ENCODE measurements at regions of chr19 and their contacts with region 1.

Region 1: DNA sequence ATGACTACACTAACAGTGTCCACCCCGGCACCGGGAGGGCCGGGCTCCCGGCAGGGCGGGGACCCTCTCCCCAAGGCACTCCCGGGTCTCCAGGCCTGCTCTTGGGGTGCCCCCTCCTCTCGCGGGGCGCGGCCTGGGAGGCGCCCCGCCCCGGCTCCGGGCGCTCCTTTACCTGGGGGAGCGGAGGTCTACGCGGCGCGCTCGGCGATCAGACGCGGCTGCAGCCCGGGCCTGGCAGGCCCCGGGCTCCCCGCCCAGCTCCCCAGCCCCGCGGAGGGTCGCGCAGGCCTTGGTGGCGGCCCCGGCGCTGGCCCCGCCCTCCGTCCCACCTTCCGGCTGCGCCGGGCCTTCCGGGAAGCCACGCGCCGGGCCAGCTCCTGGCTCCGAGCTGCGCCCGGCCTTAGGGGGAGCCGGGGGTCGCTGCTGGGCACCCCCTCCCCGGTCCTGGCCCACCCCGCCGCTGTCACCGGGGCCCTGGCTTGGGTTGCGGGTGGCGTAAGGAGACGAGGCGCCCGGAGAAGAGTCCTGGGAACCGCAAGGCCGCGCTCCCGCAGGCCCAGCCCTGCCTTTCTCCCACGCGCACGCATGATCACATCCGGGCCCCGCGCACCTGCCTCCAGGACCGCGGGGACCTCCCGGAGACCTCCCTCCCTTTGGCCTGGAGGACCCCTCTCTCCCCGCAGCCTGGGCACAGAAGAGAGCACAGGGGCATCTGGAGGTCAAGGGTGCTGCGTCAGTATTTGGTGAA is at the start of gene C19orf12:
- DNase-seq: peak in 1 of 2 donors; percentile 77
- H3K4me3 ChIP-seq: peak within 1 kb of the TSS; percentile 88 to 94
- H3K27ac ChIP-seq: peak within 1 kb of the TSS; percentile 89 to 96
- H3K4me1 ChIP-seq: peaks cover 0 to 42% (median 29%) of the 10 kb centered on the region in 4 donors
- H3K27me3 ChIP-seq: no peaks in the 10 kb centered on the region
- CTCF ChIP-seq: peak in 1 of 2 experiments; percentile 7

Region 2: GRCh38 chr19:29610563-29611271 is 104.4 kb before region 1 on chr19:
- intact Hi-C with region 1: loop called (anchors 2 kb)
- DNase-seq: peak; percentile 84 to 86
- H3K4me3 ChIP-seq: no peak overlapping the region
- H3K27ac ChIP-seq: no peak overlapping the region
- H3K4me1 ChIP-seq: peaks cover 0 to 9% (median 6%) of the 10 kb centered on the region in 4 donors
- H3K27me3 ChIP-seq: no peaks in the 10 kb centered on the region
- CTCF ChIP-seq: peak; percentile 83 to 88

Region 3: GRCh38 chr19:29662604-29663404 is 52.3 kb before region 1 on chr19:
- intact Hi-C with region 1: loop called (anchors 5 kb)
- DNase-seq: peak; percentile 85 to 93
- H3K4me3 ChIP-seq: peak overlapping the region; percentile 16 to 37
- H3K27ac ChIP-seq: peak overlapping the region; percentile 93
- H3K4me1 ChIP-seq: peaks cover 0 to 59% (median 46%) of the 10 kb centered on the region in 4 donors
- H3K27me3 ChIP-seq: no peaks in the 10 kb centered on the region
- CTCF ChIP-seq: no peak

Region 4: DNA sequence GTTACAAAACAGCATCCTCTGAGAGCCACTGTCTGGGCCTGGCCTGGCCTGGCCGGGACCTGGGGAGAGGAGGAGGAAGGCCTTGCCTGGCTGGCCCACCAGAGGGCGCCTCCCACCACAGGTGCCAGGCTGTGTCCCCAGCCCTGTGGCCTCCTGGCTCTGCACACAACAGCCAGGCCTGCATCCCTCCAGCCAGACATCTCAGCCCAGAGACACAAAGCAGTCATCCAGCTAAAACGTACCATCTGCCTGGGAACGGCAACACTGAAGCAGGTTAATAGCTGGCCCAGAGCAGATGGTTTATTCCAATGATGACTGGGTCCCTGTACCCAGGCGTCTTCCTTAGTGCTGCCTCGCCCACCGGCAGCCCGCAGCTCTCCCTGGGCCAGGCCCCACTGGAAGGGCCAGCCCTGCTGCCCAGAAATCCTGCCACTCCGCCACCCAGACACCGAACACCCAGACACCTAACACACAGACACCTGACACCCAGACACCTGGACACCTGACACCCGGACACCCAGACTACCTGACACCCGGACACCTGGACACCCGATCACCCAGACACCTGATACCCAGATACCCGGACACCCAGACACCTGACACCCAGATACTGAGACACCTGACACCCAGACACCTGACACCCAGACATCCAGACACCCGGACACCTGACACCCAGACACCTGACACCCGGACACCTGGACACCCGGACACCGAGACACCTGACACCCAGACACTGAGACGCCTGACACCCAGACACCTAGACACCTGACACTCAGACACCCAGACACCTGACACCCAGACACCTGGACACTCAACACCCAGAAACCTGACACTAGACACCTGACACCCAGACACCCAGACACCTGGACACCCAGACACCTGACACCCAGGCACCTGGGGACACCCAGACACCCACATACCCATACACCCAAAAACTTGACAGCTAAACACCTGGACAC is 20.2 kb before region 1 on chr19:
- intact Hi-C with region 1: loop called (anchors 2 kb)
- DNase-seq: peak; percentile 89 to 90
- H3K4me3 ChIP-seq: no peak overlapping the region
- H3K27ac ChIP-seq: peak overlapping the region in 1 of 2 donors; percentile 28
- H3K4me1 ChIP-seq: no peaks in the 10 kb centered on the region
- H3K27me3 ChIP-seq: no peaks in the 10 kb centered on the region
- CTCF ChIP-seq: peak; percentile 84 to 95

Region 5: DNA sequence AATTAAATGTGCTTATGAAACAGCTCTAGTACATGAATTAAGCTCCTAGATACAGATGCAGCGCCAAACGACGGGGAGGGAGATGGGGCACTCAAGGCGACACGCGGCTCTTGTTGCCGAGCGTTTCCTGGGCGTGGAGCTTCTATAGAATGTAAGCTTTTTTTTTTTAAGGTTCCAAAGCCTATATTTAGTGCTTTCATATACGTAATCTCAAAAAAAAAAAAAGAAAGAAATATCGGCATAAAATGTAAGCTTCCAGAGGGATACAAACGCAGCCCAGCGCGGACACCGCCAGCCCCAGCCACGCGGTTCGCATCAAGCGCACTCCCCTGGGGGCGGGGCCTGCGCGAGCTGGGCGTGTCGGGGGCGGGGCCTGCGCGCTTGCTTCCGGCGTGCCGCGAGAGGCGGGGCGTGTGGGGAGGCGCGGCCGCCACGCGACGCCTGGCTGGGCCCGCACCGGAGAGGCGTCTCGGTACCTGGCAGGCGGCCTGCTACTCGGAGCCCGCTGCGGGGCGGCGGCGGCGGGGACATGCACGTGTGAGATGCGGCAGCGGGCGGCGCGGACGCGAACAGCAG is 226.8 kb after region 1 on chr19 and contains the start of gene URI1:
- intact Hi-C with region 1: loop called (anchors 2 kb)
- DNase-seq: peak; percentile 84 to 95
- H3K4me3 ChIP-seq: peak within 1 kb of the TSS; percentile 72 to 81
- H3K27ac ChIP-seq: peak within 1 kb of the TSS; percentile 75
- H3K4me1 ChIP-seq: peaks cover 0 to 43% (median 17%) of the 10 kb centered on the region in 4 donors
- H3K27me3 ChIP-seq: peaks cover 0 to 2% of the 10 kb centered on the region in 2 donors
- CTCF ChIP-seq: no peak

Measured in tibial artery (tissue), 4 donors.